ENCODE measurements at regions of chr22 and their contacts with region 1.

Region 1: DNA sequence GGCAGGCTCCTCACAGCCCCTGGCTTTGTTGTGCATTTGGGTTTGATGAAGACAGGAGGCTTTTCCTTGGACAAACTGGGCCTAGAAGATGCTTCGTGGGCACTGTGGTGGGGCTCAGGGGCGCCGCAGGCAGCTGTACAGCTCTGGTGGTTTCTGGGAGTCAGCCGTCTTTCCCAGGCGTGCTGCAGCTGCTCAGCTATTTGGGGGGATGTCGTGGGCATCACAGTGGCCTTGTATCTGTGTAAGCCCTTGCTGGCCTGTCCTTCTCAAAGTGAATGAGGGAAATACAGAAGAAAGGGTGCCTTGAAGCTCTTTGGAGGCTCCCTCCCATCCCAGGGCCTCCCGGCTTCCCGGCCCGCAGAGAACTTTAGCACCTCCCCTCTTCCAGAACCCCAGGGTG is 89.5 kb downstream of the TBC1D22A start:
- DNase-seq: no peak
- H3K4me3 ChIP-seq: no peak overlapping the region
- H3K4me3 Mint-ChIP-seq: no peak overlapping the region
- H3K27ac Mint-ChIP-seq: no peak overlapping the region
- H3K4me1 ChIP-seq: no peaks in the 10 kb centered on the region
- H3K4me1 Mint-ChIP-seq: peaks cover 16% of the 10 kb centered on the region
- H3K27me3 ChIP-seq: no peaks in the 10 kb centered on the region
- H3K27me3 Mint-ChIP-seq: no peaks in the 10 kb centered on the region
- CTCF ChIP-seq: no peak

Region 2: DNA sequence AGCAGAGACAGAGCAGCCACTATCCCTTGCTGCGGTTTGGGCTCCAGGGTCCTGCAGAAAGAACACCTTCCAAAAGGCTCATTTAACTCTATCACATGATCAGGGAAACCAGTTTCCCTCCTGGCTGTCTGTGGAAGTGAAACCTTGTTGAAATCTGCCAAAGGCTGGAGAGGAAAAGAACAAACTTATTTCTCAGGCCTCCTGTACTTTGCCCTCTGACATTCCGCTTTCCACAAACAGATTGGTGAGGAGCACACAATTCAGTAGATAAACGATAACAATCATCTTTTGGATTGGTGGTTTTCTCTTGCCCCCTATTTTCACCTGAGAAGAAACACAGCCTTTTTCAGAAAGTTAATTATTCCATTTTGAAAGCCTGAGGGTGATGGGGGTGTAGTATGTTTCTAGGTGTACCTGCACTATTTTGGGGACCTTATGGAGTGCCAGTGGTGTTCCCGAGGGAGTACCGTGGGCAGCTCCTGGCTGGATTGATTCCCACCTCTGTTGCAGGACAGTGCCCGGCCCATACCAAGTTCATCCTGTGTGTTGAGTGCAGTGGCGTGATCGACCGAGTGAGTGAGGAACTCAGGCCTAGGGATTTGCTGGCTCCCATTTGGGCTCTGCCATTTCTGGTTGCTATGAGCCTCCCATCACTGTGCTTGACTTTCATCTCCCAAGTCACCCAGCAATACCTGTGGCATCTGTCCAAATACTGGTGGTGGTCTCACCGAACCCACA is 12.5 kb after region 1 on chr22:
- CTCF ChIA-PET with region 1: no interaction called
- POLR2A ChIA-PET with region 1: no interaction called
- intact Hi-C with region 1: loop called (anchors 2 kb)
- DNase-seq: peak in 1 of 2 experiments; percentile 54
- H3K4me3 ChIP-seq: no peak overlapping the region
- H3K4me3 Mint-ChIP-seq: peak overlapping the region; percentile 19
- H3K27ac Mint-ChIP-seq: peak overlapping the region; percentile 89
- H3K4me1 ChIP-seq: peaks cover 29% of the 10 kb centered on the region
- H3K4me1 Mint-ChIP-seq: peaks cover 34% of the 10 kb centered on the region
- H3K27me3 ChIP-seq: no peaks in the 10 kb centered on the region
- H3K27me3 Mint-ChIP-seq: no peaks in the 10 kb centered on the region
- CTCF ChIP-seq: no peak

Region 3: GRCh38 chr22:46881373-46882118 is 29.6 kb after region 1 on chr22:
- CTCF ChIA-PET with region 1: no interaction called
- POLR2A ChIA-PET with region 1: no interaction called
- intact Hi-C with region 1: no loop called
- DNase-seq: no peak
- H3K4me3 ChIP-seq: no peak overlapping the region
- H3K4me3 Mint-ChIP-seq: no peak overlapping the region
- H3K27ac Mint-ChIP-seq: no peak overlapping the region
- H3K4me1 ChIP-seq: no peaks in the 10 kb centered on the region
- H3K4me1 Mint-ChIP-seq: peaks cover 13% of the 10 kb centered on the region
- H3K27me3 ChIP-seq: no peaks in the 10 kb centered on the region
- H3K27me3 Mint-ChIP-seq: no peaks in the 10 kb centered on the region
- CTCF ChIP-seq: no peak

Region 4: DNA sequence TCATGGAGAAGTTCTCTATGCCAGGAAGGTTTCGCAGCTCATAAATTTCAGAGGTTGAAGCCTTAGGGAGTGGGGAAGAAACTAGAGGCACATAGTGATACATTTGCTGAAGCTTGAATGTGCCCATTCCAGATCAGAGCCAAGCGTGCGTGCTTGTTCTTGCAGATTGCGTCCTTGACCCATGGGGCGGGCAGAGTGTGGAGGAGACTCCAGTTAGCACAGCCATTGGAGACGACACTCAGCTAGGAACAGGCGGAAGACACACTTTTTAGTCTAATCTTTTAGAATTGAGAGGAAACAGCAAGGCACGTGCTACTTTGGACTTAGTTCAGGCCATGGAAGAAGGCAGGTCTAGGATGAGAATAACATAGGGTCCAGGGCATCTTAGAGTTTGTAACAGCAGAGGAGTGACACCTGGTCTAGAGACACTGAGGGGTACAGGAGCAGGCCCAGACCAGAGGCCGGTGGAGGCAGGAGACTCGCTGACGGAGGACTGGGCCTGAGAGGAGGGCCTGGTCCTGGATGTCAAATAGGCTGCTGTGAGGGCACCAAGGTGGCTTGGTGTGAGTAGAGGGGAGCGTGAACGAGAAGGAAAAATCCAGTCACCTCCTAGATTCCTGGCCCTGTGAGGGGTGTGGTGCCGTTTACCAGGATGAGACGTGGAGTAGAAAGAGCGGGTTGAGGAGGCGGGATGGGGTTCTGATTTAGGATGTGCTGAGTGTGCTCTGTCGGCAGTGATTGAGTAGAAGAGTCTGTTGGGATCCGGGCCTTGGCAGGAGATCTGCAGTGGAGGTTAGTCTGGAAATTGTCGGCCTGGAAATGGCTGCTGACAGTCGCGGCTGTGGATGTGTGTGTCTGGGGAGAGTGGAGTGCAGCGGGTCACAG is 65.2 kb after region 1 on chr22:
- CTCF ChIA-PET with region 1: no interaction called
- POLR2A ChIA-PET with region 1: no interaction called
- intact Hi-C with region 1: no loop called
- DNase-seq: no peak
- H3K4me3 ChIP-seq: no peak overlapping the region
- H3K4me3 Mint-ChIP-seq: no peak overlapping the region
- H3K27ac Mint-ChIP-seq: peak overlapping the region; percentile 45
- H3K4me1 ChIP-seq: no peaks in the 10 kb centered on the region
- H3K4me1 Mint-ChIP-seq: no peaks in the 10 kb centered on the region
- H3K27me3 ChIP-seq: no peaks in the 10 kb centered on the region
- H3K27me3 Mint-ChIP-seq: no peaks in the 10 kb centered on the region
- CTCF ChIP-seq: no peak

Measured in Caco-2 (cell line).